B cell (primary cell): ENCODE measurements at regions of chr10 and their contacts with region 1.

Region 1: GRCh38 chr10:91409869-91410637 is at the start of gene HECTD2:
- DNase-seq: peak; percentile 94
- ATAC-seq: peak; percentile 81
- H3K4me3 ChIP-seq: peak within 1 kb of the TSS; percentile 71 to 96 (median 78)
- H3K4me3 Mint-ChIP-seq: peak within 1 kb of the TSS; percentile 84
- H3K27ac ChIP-seq: peak within 1 kb of the TSS; percentile 92 to 94
- H3K27ac Mint-ChIP-seq: peak within 1 kb of the TSS; percentile 88
- H3K4me1 ChIP-seq: peaks cover 8 to 13% of the 10 kb centered on the region in 2 donors
- H3K4me1 Mint-ChIP-seq: peaks cover 14% of the 10 kb centered on the region
- H3K27me3 ChIP-seq: no peaks in the 10 kb centered on the region
- H3K27me3 Mint-ChIP-seq: no peaks in the 10 kb centered on the region
- CTCF ChIP-seq: peak; percentile 24
- total RNA-seq, gene HECTD2: 7.9 and 10.7 TPM in 2 replicates

Region 2: DNA sequence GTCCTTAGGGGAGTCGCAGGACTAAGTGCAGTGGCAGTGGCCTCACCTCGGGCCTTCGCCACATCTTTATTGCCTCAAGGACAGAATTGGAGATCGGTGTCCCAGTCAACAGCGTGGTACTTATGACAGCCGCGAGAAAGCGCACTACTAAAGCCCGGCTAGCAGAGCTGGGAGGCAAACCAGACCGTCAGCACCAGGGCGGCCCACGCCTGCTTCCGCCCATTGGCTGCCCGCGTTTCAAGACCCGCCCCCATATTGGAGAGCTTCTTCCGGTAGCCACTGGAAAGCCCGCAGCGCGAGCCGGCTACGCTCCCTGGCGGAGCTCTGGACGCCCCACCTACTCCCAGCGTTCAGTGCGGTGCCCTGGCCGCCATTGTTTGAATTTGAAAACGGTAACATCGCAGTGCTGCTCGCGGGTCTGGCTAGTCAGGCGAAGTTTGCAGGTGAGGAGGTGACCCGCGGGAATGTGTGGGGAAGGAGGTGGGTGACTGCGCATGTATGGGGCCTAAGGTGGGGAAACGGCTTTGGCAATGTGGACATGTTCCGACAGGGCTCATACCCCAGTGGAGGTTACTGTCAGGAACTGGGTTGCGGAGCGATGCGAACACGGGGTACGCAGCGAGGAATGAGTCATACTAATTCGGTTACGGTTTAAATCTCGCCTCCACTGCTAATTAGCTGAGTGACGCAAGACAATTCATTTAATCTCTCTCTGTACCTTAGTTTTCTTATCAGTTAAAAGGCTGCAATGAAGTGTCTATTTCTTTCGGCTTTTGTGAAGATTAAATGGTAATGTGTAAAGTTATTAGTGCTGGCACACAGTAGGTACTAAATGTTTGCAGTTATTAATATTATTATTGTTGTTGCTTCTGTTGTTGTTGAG is 1708.6 kb before region 1 on chr10 and contains the start of gene KIF20B:
- CTCF ChIA-PET with region 1: no interaction called
- POLR2A ChIA-PET with region 1: no interaction called
- intact Hi-C with region 1: loop called (anchors 10 kb)
- DNase-seq: peak; percentile 95
- ATAC-seq: peak; percentile 98
- H3K4me3 ChIP-seq: peak within 1 kb of the TSS; percentile 86 to 98 (median 95)
- H3K4me3 Mint-ChIP-seq: peak within 1 kb of the TSS; percentile 99
- H3K27ac ChIP-seq: peak within 1 kb of the TSS; percentile 79 to 87
- H3K27ac Mint-ChIP-seq: peak within 1 kb of the TSS; percentile 99
- H3K4me1 ChIP-seq: peaks cover 9 to 10% of the 10 kb centered on the region in 2 donors
- H3K4me1 Mint-ChIP-seq: peaks cover 32% of the 10 kb centered on the region
- H3K27me3 ChIP-seq: no peaks in the 10 kb centered on the region
- H3K27me3 Mint-ChIP-seq: no peaks in the 10 kb centered on the region
- CTCF ChIP-seq: peak; percentile 29
- total RNA-seq, gene KIF20B: 24.6 and 25.3 TPM in 2 replicates

Region 3: GRCh38 chr10:90213346-90213745 is 1196.7 kb before region 1 on chr10:
- CTCF ChIA-PET with region 1: no interaction called
- POLR2A ChIA-PET with region 1: no interaction called
- intact Hi-C with region 1: no loop called
- DNase-seq: no peak
- ATAC-seq: no peak
- H3K4me3 ChIP-seq: no peak overlapping the region
- H3K4me3 Mint-ChIP-seq: no peak overlapping the region
- H3K27ac ChIP-seq: no peak overlapping the region
- H3K27ac Mint-ChIP-seq: no peak overlapping the region
- H3K4me1 ChIP-seq: no peaks in the 10 kb centered on the region
- H3K4me1 Mint-ChIP-seq: no peaks in the 10 kb centered on the region
- H3K27me3 ChIP-seq: no peaks in the 10 kb centered on the region
- H3K27me3 Mint-ChIP-seq: no peaks in the 10 kb centered on the region
- CTCF ChIP-seq: no peak

Region 4: DNA sequence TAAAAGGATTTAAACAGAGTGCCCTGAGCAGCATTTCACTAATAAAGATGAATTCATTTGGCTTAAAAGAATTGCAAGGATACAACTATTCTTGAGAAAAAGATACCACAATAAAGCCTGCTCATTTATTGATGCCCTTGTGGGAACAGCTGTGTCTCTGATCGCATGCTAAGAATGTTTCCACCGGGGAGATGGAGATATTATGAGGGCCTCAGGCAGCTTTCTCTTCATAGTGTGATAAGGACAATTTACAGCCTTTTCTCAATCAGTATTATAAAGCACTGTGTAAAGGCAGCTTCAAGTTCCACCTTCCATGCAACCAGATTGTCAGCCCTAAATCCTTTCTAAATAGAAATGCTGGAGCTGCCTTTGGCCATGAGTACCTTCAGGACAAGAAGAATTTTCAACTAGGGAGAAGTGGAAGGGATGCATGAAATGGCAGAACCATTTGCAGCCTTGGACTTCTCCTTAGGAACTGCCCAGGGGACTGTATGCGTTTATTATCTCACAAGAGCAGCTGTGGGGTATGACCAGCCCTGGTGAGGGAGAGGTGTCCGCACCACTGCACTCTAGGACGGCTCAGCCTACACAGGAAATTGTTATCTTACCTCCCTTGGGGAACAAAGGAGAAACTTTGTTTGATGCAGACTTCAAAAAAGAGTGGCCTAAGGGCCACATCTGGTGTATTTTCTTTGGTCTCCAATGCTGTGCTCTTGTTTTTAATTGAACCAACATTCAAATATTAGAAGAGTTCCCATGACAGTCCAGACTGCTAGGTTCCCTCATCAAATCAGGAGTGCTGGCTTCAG is 306.5 kb before region 1 on chr10:
- CTCF ChIA-PET with region 1: no interaction called
- POLR2A ChIA-PET with region 1: no interaction called
- intact Hi-C with region 1: loop called (anchors 10 kb)
- DNase-seq: peak; percentile 31
- ATAC-seq: peak; percentile 84
- H3K4me3 ChIP-seq: peak overlapping the region in 1 of 5 experiments; percentile 16
- H3K4me3 Mint-ChIP-seq: peak overlapping the region; percentile 70
- H3K27ac ChIP-seq: peak overlapping the region in 1 of 2 donors; percentile 43
- H3K27ac Mint-ChIP-seq: peak overlapping the region; percentile 76
- H3K4me1 ChIP-seq: peaks cover 22 to 28% of the 10 kb centered on the region in 2 donors
- H3K4me1 Mint-ChIP-seq: peaks cover 35% of the 10 kb centered on the region
- H3K27me3 ChIP-seq: no peaks in the 10 kb centered on the region
- H3K27me3 Mint-ChIP-seq: no peaks in the 10 kb centered on the region
- CTCF ChIP-seq: no peak

Region 5: DNA sequence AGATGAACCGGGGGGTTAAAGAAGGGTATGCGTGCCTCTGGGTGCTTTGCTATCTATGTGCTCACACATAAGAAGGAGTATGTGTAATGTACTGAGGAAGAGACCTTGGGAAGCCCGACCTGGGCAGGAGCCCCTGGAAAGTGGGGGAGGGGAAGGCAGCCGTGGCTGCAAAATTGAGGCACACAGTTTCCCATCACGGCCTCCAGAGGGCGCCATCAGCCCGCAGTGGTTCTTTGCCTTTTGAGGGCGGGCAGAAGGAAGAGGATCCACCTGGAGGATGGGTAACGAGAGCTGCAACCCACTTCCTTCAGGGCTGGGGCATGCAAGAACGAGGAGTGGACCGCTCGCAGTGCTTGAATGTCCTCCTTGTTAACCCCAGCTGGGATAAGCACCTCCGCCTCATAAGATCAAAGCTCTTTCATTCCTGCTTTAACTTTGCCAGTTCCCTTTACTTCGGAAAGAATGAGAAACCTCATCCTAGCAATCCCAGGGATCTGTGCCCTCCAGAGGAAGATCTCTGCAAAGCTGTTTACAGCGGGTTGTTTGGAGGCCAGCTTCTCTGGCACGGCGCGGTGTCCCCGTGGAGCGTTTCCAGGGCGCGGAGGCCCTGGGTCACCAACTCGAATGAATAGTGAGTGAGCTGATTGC is 111.7 kb before region 1 on chr10:
- CTCF ChIA-PET with region 1: interaction called, 4 read pairs
- POLR2A ChIA-PET with region 1: no interaction called
- intact Hi-C with region 1: loop called (anchors 5 kb)
- DNase-seq: peak; percentile 85
- ATAC-seq: peak; percentile 94
- H3K4me3 ChIP-seq: peak overlapping the region in 4 of 5 experiments; percentile 14 to 54 (median 48)
- H3K4me3 Mint-ChIP-seq: peak overlapping the region; percentile 75
- H3K27ac ChIP-seq: no peak overlapping the region
- H3K27ac Mint-ChIP-seq: no peak overlapping the region
- H3K4me1 ChIP-seq: peaks cover 11% of the 10 kb centered on the region in 2 donors
- H3K4me1 Mint-ChIP-seq: peaks cover 9% of the 10 kb centered on the region
- H3K27me3 ChIP-seq: no peaks in the 10 kb centered on the region
- H3K27me3 Mint-ChIP-seq: peaks cover 21% of the 10 kb centered on the region
- CTCF ChIP-seq: peak; percentile 93

Region 6: GRCh38 chr10:91434041-91434440 is 24.0 kb after region 1 on chr10:
- CTCF ChIA-PET with region 1: no interaction called
- POLR2A ChIA-PET with region 1: no interaction called
- intact Hi-C with region 1: no loop called
- DNase-seq: no peak
- ATAC-seq: no peak
- H3K4me3 ChIP-seq: no peak overlapping the region
- H3K4me3 Mint-ChIP-seq: no peak overlapping the region
- H3K27ac ChIP-seq: no peak overlapping the region
- H3K27ac Mint-ChIP-seq: no peak overlapping the region
- H3K4me1 ChIP-seq: no peaks in the 10 kb centered on the region
- H3K4me1 Mint-ChIP-seq: peaks cover 3% of the 10 kb centered on the region
- H3K27me3 ChIP-seq: no peaks in the 10 kb centered on the region
- H3K27me3 Mint-ChIP-seq: no peaks in the 10 kb centered on the region
- CTCF ChIP-seq: no peak

Region 7: DNA sequence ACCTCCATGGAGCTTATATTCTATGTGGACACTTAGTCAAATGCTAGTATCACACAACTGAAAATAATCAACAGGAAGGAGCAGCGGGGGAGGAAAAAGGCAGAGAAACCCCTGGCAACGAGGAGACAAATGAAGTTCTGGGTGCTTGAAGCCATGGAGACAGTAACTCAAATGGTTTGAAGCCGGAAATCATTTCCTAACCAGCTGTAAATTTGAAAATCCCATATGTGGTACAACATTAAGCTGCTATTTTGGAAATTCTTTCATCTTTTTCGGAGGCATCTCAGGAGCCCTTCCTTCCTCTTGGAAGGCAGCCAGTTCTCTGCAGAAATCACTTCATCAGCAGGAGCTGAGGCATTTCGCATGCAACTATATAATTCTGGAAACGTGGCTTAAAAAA is 131.4 kb after region 1 on chr10:
- CTCF ChIA-PET with region 1: no interaction called
- POLR2A ChIA-PET with region 1: no interaction called
- intact Hi-C with region 1: no loop called
- DNase-seq: no peak
- ATAC-seq: no peak
- H3K4me3 ChIP-seq: no peak overlapping the region
- H3K4me3 Mint-ChIP-seq: no peak overlapping the region
- H3K27ac ChIP-seq: no peak overlapping the region
- H3K27ac Mint-ChIP-seq: no peak overlapping the region
- H3K4me1 ChIP-seq: no peaks in the 10 kb centered on the region
- H3K4me1 Mint-ChIP-seq: no peaks in the 10 kb centered on the region
- H3K27me3 ChIP-seq: no peaks in the 10 kb centered on the region
- H3K27me3 Mint-ChIP-seq: peaks cover 20% of the 10 kb centered on the region
- CTCF ChIP-seq: no peak

Region 8: GRCh38 chr10:91908337-91909116 is 498.5 kb after region 1 on chr10:
- CTCF ChIA-PET with region 1: no interaction called
- POLR2A ChIA-PET with region 1: no interaction called
- intact Hi-C with region 1: loop called (anchors 1 kb)
- DNase-seq: peak; percentile 87
- ATAC-seq: peak; percentile 83
- H3K4me3 ChIP-seq: peak overlapping the region; percentile 61 to 75 (median 69)
- H3K4me3 Mint-ChIP-seq: peak overlapping the region; percentile 96
- H3K27ac ChIP-seq: peak overlapping the region; percentile 9 to 52
- H3K27ac Mint-ChIP-seq: peak overlapping the region; percentile 93
- H3K4me1 ChIP-seq: peaks cover 10 to 11% of the 10 kb centered on the region in 2 donors
- H3K4me1 Mint-ChIP-seq: peaks cover 18% of the 10 kb centered on the region
- H3K27me3 ChIP-seq: no peaks in the 10 kb centered on the region
- H3K27me3 Mint-ChIP-seq: peaks cover 7% of the 10 kb centered on the region
- CTCF ChIP-seq: peak; percentile 45